ENCODE measurements at regions of chr12 and their contacts with region 1.

Region 1: GRCh38 chr12:31659087-31659933 is at the start of gene ETFBKMT:
- DNase-seq: peak; percentile 88
- ATAC-seq: peak; percentile 98
- H3K4me3 Mint-ChIP-seq: peak within 1 kb of the TSS; percentile 96
- H3K27ac Mint-ChIP-seq: peak within 1 kb of the TSS; percentile 99
- H3K4me1 Mint-ChIP-seq: peaks cover 35% of the 10 kb centered on the region
- H3K27me3 Mint-ChIP-seq: no peaks in the 10 kb centered on the region
- CTCF ChIP-seq: no peak
- total RNA-seq, gene ETFBKMT: 0.91 and 2.0 TPM in 2 replicates

Region 2: DNA sequence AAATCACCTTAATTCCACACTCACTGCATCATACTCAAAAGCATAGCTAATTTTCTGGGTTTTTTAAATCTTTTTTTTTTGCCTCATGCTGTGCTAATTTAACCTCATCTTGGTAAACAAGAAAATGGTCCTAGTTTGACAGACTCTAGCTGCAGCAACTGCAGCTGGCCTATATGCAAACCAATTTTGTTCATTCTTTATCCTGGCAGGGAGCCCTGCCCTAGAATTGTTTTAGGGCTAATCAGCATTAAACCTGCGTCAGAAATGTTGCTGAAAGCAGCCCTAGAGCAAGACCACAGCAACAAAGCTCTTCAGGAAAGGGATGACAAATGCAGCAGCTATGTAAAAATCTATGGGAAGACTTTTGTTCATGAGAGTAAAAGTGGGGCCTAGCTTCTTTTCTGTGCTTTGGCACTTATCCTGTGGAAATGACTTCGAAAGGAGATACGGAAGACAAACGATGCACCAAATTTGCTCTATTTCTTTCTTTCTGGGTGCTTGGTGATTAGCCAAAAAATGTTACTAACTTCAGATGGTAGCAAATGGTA is 140.6 kb before region 1 on chr12:
- CTCF ChIA-PET with region 1: no interaction called
- POLR2A ChIA-PET with region 1: no interaction called
- intact Hi-C with region 1: no loop called
- DNase-seq: no peak
- ATAC-seq: no peak
- H3K4me3 Mint-ChIP-seq: no peak overlapping the region
- H3K27ac Mint-ChIP-seq: no peak overlapping the region
- H3K4me1 Mint-ChIP-seq: peaks cover 59% of the 10 kb centered on the region
- H3K27me3 Mint-ChIP-seq: no peaks in the 10 kb centered on the region
- CTCF ChIP-seq: no peak

Region 3: GRCh38 chr12:31715283-31715825 is 56.0 kb after region 1 on chr12:
- CTCF ChIA-PET with region 1: no interaction called
- POLR2A ChIA-PET with region 1: interaction called, 5 read pairs
- intact Hi-C with region 1: loop called (anchors 1 kb)
- DNase-seq: no peak
- ATAC-seq: peak; percentile 93
- H3K4me3 Mint-ChIP-seq: peak overlapping the region; percentile 32
- H3K27ac Mint-ChIP-seq: peak overlapping the region; percentile 85
- H3K4me1 Mint-ChIP-seq: peaks cover 58% of the 10 kb centered on the region
- H3K27me3 Mint-ChIP-seq: no peaks in the 10 kb centered on the region
- CTCF ChIP-seq: no peak

Region 4: GRCh38 chr12:31832740-31833729 is 173.7 kb after region 1 on chr12:
- CTCF ChIA-PET with region 1: no interaction called
- POLR2A ChIA-PET with region 1: interaction called, 3 read pairs
- intact Hi-C with region 1: loop called (anchors 1 kb)
- DNase-seq: peak; percentile 36
- ATAC-seq: peak; percentile 84
- H3K4me3 Mint-ChIP-seq: peak overlapping the region; percentile 59
- H3K27ac Mint-ChIP-seq: peak overlapping the region; percentile 94
- H3K4me1 Mint-ChIP-seq: peaks cover 76% of the 10 kb centered on the region
- H3K27me3 Mint-ChIP-seq: no peaks in the 10 kb centered on the region
- CTCF ChIP-seq: no peak

Region 5: GRCh38 chr12:32106517-32107358 is 447.4 kb after region 1 on chr12 and contains the start of gene BICD1:
- CTCF ChIA-PET with region 1: no interaction called
- POLR2A ChIA-PET with region 1: interaction called, 3 read pairs
- intact Hi-C with region 1: loop called (anchors 1 kb)
- DNase-seq: peak; percentile 69
- ATAC-seq: peak; percentile 78
- H3K4me3 Mint-ChIP-seq: peak within 1 kb of the TSS; percentile 95
- H3K27ac Mint-ChIP-seq: peak within 1 kb of the TSS; percentile 95
- H3K4me1 Mint-ChIP-seq: peaks cover 28% of the 10 kb centered on the region
- H3K27me3 Mint-ChIP-seq: no peaks in the 10 kb centered on the region
- CTCF ChIP-seq: no peak
- total RNA-seq, gene BICD1: 55.5 and 67.6 TPM in 2 replicates

Region 6: DNA sequence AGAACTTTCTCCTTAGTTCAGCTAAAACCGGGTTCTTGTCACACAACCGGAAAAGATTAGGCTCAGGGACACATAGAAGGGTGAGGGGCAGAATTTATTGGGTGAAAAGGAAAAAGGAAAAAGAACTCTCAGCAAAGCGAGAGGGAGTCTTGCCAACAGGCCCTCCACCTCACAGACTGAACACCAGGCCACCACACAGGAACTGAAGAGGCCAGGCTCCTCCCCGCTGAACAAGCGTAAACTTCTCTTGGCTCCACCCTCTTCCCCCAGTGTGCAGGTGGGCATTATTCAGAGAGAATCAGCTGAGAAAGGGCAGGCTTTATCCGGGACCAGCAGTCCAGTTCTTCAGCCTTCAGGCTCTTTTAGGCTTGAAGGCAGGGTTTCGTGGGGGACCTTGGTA is 614.4 kb after region 1 on chr12:
- CTCF ChIA-PET with region 1: no interaction called
- POLR2A ChIA-PET with region 1: no interaction called
- intact Hi-C with region 1: loop called (anchors 1 kb)
- DNase-seq: peak; percentile 47
- ATAC-seq: peak; percentile 96
- H3K4me3 Mint-ChIP-seq: peak overlapping the region; percentile 77
- H3K27ac Mint-ChIP-seq: peak overlapping the region; percentile 99
- H3K4me1 Mint-ChIP-seq: peaks cover 39% of the 10 kb centered on the region
- H3K27me3 Mint-ChIP-seq: no peaks in the 10 kb centered on the region
- CTCF ChIP-seq: no peak